ENCODE measurements at regions of chr15 and their contacts with region 1.

Region 1: GRCh38 chr15:68817304-68818065 is 3.2 kb downstream of the ANP32A start:
- DNase-seq: peak; percentile 63 to 75 (median 71)
- H3K4me3 ChIP-seq: peak overlapping the region in 3 of 4 donors; percentile 58 to 97 (median 81)
- H3K27ac ChIP-seq: peak overlapping the region; percentile 95 to 99 (median 97)
- H3K4me1 ChIP-seq: peaks cover 9 to 43% of the 10 kb centered on the region in 2 donors
- H3K27me3 ChIP-seq: no peaks in the 10 kb centered on the region
- CTCF ChIP-seq: no peak
- POLR2A ChIP-seq: peak in 1 of 2 donors; percentile 63

Region 2: DNA sequence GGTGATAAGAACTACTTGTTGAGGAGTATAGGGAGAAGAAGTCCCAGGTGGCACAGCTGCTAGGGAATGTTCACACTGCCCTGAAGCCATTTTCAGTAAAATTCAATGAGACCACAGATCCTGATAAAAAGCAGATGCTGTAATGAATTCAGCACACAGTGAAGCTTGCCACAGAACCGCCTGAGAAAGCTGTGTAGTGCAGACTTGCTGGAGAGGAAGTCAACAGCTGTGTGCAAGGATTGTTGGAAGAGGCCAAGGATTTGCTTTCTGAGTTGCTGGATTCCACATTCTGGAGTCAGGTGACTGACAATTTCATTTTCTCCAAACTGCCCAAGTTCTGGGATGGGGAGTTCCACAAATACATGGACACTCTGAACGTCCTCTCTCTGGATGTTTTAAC is 67.7 kb before region 1 on chr15:
- intact Hi-C with region 1: no loop called
- DNase-seq: peak in 1 of 7 donors; percentile 20
- H3K4me3 ChIP-seq: no peak overlapping the region
- H3K27ac ChIP-seq: no peak overlapping the region
- H3K4me1 ChIP-seq: no peaks in the 10 kb centered on the region
- H3K27me3 ChIP-seq: no peaks in the 10 kb centered on the region
- CTCF ChIP-seq: no peak
- POLR2A ChIP-seq: no peak

Region 3: DNA sequence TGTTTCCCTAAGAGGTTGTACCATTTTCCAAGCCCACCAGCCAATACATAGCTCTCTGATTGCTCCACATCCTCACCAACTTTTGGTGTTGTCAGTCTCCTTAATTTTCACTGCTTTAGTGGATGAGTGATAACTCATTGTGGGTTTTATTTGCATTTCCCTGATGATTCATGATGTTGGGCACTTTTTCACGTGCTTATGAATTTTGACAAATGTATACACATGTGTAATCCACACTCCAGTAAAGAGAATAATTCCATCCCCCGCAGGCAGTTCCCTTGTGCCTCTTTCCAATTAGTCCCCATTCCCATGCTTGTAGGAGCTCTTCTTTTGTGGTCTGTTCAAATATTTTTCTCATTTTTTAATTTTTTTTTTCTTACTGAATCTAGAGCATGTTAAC is 49.2 kb before region 1 on chr15:
- intact Hi-C with region 1: no loop called
- DNase-seq: no peak
- H3K4me3 ChIP-seq: no peak overlapping the region
- H3K27ac ChIP-seq: no peak overlapping the region
- H3K4me1 ChIP-seq: no peaks in the 10 kb centered on the region
- H3K27me3 ChIP-seq: no peaks in the 10 kb centered on the region
- CTCF ChIP-seq: no peak
- POLR2A ChIP-seq: no peak

Region 4: DNA sequence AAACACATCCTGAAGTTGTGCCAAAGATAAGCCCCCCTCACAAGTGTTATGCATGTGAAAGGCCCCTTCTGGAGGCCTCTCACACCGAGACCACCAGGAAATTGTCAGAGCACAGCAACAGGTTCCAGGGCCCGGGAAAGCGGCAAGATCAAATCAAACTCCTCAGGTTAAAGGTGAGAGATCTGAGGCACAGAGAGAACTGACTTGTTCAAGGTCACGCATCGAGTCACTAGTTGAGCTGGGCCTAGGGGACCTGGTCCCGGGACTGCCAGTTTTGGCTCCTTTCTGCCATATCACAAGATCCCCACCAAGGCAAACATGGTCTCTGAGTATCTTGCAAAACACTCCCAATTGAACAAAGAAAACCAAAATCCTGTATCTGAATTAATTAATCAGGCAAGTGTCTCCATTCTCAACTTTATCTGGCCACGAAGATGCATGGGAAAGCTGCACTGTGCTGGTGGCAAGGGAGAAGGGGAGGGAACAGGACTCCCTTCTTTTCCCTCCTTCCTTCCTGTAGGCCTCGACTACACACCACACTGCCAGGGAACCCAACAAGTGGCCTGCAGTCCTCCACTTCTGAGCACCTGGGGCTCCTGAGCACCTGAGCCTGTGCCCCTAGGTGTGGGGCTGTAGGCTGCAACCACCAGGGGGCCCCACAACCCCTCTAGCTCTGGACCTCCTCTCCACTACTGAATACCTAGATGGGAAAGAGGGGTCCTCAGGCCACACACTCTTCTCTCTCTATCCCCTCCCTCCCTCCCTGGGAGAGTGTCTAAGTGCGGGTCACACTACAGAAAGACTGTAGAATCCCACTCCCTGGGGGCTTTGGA is 34.0 kb before region 1 on chr15:
- intact Hi-C with region 1: loop called in 1 of 2 experiments (anchors 5 kb)
- DNase-seq: peak in 3 of 7 donors; percentile 45 to 61 (median 56)
- H3K4me3 ChIP-seq: no peak overlapping the region
- H3K27ac ChIP-seq: peak overlapping the region in 1 of 5 donors; percentile 6
- H3K4me1 ChIP-seq: peaks cover 0 to 10% of the 10 kb centered on the region in 2 donors
- H3K27me3 ChIP-seq: no peaks in the 10 kb centered on the region
- CTCF ChIP-seq: peak; percentile 46 to 61 (median 55)
- POLR2A ChIP-seq: no peak